GM10248 (cell line): ENCODE measurements at regions of chr20 and their contacts with region 1.

Region 1: GRCh38 chr20:23050847-23051631 is 1.6 kb upstream of the THBD start:
- DNase-seq: peak; percentile 47
- CTCF ChIP-seq: peak; percentile 36

Region 2: GRCh38 chr20:22949331-22950109 is 101.5 kb before region 1 on chr20:
- CTCF ChIA-PET with region 1: no interaction called
- POLR2A ChIA-PET with region 1: no interaction called
- DNase-seq: no peak
- CTCF ChIP-seq: no peak

Region 3: GRCh38 chr20:23039885-23040508 is 11.0 kb before region 1 on chr20:
- CTCF ChIA-PET with region 1: interaction called, 11 read pairs
- POLR2A ChIA-PET with region 1: no interaction called
- DNase-seq: no peak
- CTCF ChIP-seq: no peak

Region 4: DNA sequence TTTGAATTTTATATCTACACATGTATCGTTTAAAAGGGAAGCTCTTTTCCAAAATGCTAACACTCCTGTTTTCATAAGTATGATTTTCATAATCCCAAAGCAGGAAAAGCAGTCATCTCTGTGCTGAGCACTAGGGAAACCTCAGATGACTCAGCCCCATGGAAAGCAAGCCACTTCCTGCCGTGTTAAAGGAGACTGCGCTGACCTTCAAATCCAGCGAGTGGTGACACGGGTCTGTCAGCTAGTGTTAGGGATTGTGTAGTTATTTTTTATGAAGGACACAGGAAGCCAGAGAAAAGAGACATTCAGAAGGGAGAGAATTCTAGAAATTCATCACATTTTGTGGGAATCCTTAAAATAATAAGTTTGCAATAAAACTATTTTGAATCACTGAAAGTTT is 92.1 kb after region 1 on chr20:
- CTCF ChIA-PET with region 1: interaction called, 10 read pairs
- POLR2A ChIA-PET with region 1: no interaction called
- DNase-seq: no peak
- CTCF ChIP-seq: no peak

Region 5: GRCh38 chr20:23235173-23236027 is 184.4 kb after region 1 on chr20:
- CTCF ChIA-PET with region 1: interaction called, 32 read pairs
- POLR2A ChIA-PET with region 1: no interaction called
- DNase-seq: peak; percentile 45
- CTCF ChIP-seq: peak; percentile 57

Region 6: DNA sequence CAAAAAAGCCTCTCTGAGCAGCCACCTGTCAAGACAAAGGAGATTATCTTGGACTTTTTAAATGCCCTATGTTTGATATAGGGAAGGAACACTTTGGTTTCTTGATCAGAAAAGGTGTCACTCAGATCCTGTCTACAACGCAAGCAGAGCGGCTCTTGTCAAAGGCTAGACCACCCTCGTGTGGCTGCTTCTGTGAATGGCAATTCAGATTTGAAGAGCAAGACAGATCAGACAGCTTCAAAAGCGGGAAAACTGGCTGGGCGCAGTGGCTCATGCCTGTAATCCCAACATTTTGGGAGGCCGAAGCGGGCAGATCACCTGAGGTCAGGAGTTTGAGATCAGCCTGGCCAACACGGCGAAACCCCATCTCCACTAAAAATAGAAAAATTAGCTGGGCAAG is 289.5 kb after region 1 on chr20:
- CTCF ChIA-PET with region 1: interaction called, 16 read pairs
- POLR2A ChIA-PET with region 1: no interaction called
- DNase-seq: peak; percentile 53
- CTCF ChIP-seq: peak; percentile 55